Sciatic nerve (tissue), 2 donors: ENCODE measurements at regions of chr3 and their contacts with region 1.

Region 1: DNA sequence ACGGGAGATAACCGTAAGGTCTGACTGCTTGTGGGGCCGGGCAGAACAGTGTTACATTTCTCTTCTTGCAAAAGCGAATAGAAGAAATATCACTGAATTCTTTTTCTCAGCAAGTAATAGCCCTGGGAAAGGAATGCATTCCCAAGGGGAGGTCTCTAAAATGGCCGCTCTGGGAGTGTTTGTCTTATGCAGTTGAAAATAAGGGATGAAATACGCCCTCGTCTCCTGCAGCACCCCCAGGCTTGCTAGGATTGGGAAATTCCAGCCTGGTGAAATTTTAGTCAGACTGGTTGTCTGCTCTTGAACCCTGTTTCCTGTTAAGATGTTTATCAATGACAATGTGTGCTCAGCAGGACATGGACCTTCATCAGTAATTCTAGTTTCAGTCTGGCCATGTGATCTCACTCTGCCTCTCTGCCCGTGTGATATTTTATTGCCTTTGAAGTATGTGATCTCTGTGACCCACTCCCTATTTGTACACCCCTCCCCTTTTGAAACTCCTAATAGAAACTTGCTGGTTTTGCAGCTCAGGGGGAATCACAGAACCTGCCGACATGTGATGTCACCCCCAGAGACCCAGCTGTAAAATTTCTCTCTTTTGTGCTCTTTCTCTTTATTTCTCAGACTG is 715.6 kb downstream of the ROBO1 start:
- DNase-seq: no peak
- ATAC-seq: no peak

Region 2: GRCh38 chr3:79012946-79013362 is 39.2 kb before region 1 on chr3:
- intact Hi-C with region 1: loop called (anchors 1 kb)
- DNase-seq: no peak
- ATAC-seq: no peak